ENCODE measurements at regions of chr9 and their contacts with region 1.

Region 1: DNA sequence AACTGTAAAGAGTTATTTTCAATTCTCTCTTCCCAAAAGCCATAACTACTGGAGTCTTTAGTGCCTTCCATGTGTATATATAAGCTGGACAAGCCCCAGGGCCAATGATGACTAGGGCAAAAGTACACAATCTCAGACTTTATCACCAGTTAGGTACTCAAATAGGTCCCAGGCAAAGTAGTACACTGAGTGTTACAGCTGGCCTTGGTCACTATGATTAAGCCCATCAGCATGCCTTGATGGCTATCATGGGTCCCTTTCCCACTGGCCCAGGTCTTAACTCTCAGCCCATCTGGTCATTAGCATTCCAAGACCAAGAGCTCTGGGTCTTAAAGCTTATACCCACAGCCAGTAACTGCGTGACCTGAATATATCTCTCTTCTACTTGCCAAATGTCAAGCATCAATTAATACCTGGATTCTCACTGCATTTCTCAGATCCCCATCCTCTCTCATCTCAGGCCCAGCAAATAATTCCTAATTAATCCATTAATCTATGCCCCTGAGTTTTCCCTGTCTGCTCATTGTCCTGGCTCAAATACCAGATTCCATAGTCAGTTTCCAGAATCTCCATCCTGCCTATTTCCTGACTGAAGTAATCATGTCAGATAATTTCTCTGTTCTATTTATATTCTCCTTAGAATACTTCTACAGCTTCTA is 62.3 kb downstream of the NR6A1 start:
- DNase-seq: no peak
- H3K4me3 Mint-ChIP-seq: no peak overlapping the region
- H3K27ac Mint-ChIP-seq: no peak overlapping the region
- H3K4me1 Mint-ChIP-seq: no peaks in the 10 kb centered on the region
- H3K27me3 Mint-ChIP-seq: peaks cover 11% of the 10 kb centered on the region

Region 2: GRCh38 chr9:124551472-124552272 is 157.1 kb before region 1 on chr9:
- CTCF ChIA-PET with region 1: interaction called, 8 read pairs
- POLR2A ChIA-PET with region 1: no interaction called
- intact Hi-C with region 1: loop called (anchors 2 kb)
- DNase-seq: peak; percentile 47
- H3K4me3 Mint-ChIP-seq: no peak overlapping the region
- H3K27ac Mint-ChIP-seq: no peak overlapping the region
- H3K4me1 Mint-ChIP-seq: no peaks in the 10 kb centered on the region
- H3K27me3 Mint-ChIP-seq: peaks cover 11% of the 10 kb centered on the region

Region 3: GRCh38 chr9:124658165-124659017 is 50.4 kb before region 1 on chr9:
- CTCF ChIA-PET with region 1: no interaction called
- POLR2A ChIA-PET with region 1: interaction called, 3 read pairs
- intact Hi-C with region 1: loop called (anchors 5 kb)
- DNase-seq: peak; percentile 49
- H3K4me3 Mint-ChIP-seq: peak overlapping the region; percentile 81
- H3K27ac Mint-ChIP-seq: no peak overlapping the region
- H3K4me1 Mint-ChIP-seq: peaks cover 21% of the 10 kb centered on the region
- H3K27me3 Mint-ChIP-seq: peaks cover 25% of the 10 kb centered on the region

Region 4: DNA sequence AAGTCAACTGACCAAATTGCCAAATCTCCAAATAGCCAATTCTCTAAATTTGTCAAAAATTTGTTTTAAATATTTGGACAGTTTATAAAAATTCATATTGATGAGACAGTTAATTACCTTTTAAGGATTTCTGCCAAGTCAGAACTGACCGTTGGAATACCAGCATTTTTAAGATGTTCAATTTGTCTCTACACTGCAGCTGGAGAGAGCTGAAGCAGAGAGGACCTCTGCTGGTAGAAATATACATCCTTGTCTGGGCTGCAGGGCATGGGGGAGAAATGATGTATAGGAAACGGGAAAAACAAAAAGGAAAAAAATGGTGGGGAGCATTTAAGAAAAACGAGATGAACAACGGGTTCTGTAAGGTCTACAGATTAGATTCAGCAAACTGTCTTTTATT is 45.5 kb after region 1 on chr9:
- CTCF ChIA-PET with region 1: interaction called, 7 read pairs
- POLR2A ChIA-PET with region 1: no interaction called
- intact Hi-C with region 1: loop called (anchors 2 kb)
- DNase-seq: no peak
- H3K4me3 Mint-ChIP-seq: no peak overlapping the region
- H3K27ac Mint-ChIP-seq: no peak overlapping the region
- H3K4me1 Mint-ChIP-seq: peaks cover 15% of the 10 kb centered on the region
- H3K27me3 Mint-ChIP-seq: peaks cover 52% of the 10 kb centered on the region

Region 5: GRCh38 chr9:124852829-124853531 is 144.2 kb after region 1 on chr9 and contains the start of gene WDR38:
- CTCF ChIA-PET with region 1: interaction called, 32 read pairs
- POLR2A ChIA-PET with region 1: no interaction called
- intact Hi-C with region 1: no loop called
- DNase-seq: peak; percentile 84
- H3K4me3 Mint-ChIP-seq: peak within 1 kb of the TSS; percentile 70
- H3K27ac Mint-ChIP-seq: no peak within 1 kb of the TSS
- H3K4me1 Mint-ChIP-seq: peaks cover 16% of the 10 kb centered on the region
- H3K27me3 Mint-ChIP-seq: peaks cover 4% of the 10 kb centered on the region
- total RNA-seq, gene WDR38: not detected

Region 6: DNA sequence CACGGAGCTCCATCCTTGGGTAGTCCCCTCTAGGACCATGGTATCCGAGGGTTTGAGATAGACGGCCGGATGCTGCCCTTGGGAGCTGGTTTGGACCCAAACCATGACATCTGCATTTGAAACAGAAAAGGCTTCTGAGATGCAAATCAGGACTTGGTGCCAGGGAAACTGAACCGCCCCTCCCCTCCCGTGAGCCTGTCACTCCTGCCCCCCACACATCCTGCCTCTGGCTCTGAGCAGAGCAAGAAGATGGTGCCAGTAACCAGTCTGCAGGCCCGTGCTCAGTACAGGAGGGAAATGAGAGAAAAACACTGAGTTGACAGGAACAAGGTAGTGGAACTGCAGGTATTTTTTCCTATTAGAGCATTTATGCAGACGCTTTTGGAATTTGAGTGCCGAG is 171.7 kb after region 1 on chr9:
- CTCF ChIA-PET with region 1: no interaction called
- POLR2A ChIA-PET with region 1: no interaction called
- intact Hi-C with region 1: no loop called
- DNase-seq: no peak
- H3K4me3 Mint-ChIP-seq: no peak overlapping the region
- H3K27ac Mint-ChIP-seq: no peak overlapping the region
- H3K4me1 Mint-ChIP-seq: peaks cover 4% of the 10 kb centered on the region
- H3K27me3 Mint-ChIP-seq: no peaks in the 10 kb centered on the region

Measured in activated CD4-positive, alpha-beta memory T cell treated with anti-CD3 and anti-CD28 coated beads for 36 hours (primary cell).